MCF 10A (cell line): ENCODE measurements at regions of chr21 and their contacts with region 1.

Region 1: DNA sequence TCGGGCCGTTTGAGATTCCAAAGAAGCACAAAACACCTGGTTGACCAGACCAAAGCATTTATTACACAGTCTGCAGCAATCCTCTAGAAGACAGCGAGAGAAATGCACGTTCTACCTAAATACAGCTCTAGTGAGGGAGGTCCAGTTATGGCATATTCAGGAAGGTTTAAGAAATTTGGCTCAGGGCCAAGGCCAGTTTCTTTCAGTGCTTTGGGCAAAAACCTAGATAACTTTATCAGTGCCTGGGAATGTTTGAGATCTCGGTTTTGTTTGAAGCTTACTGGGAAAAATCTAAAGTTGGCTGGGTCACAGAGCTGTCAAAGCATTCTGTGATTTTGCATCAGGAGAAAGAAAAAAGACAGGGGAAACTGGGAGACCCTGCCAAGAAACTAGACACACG is 514.0 kb upstream of the TMPRSS15 start:
- DNase-seq: no peak
- H3K4me3 Mint-ChIP-seq: no peak overlapping the region
- H3K27ac Mint-ChIP-seq: no peak overlapping the region
- H3K4me1 Mint-ChIP-seq: no peaks in the 10 kb centered on the region
- H3K27me3 Mint-ChIP-seq: no peaks in the 10 kb centered on the region
- CTCF ChIP-seq: no peak

Region 2: DNA sequence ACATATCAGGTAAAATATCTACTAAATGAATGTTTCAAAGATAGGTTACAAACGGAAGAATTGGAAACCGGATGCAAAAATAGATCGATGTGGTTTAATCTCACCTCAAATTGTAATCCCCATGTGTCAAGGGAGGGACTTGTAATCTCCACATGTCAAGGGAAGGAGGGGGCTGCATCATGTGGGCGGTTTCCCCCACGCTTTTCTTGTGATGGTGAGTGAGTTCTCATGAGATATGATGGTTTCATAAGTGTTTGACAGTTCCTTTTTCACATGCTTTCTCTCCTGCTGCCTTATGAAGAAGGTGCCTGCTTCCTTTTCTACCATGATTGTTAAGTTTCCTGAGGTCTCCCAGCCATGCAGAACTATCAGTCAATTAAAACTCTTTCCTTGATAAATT is 105.3 kb before region 1 on chr21:
- CTCF ChIA-PET with region 1: no interaction called
- POLR2A ChIA-PET with region 1: no interaction called
- intact Hi-C with region 1: loop called (anchors 10 kb)
- DNase-seq: no peak
- H3K4me3 Mint-ChIP-seq: no peak overlapping the region
- H3K27ac Mint-ChIP-seq: no peak overlapping the region
- H3K4me1 Mint-ChIP-seq: peaks cover 5% of the 10 kb centered on the region
- H3K27me3 Mint-ChIP-seq: no peaks in the 10 kb centered on the region
- CTCF ChIP-seq: no peak